ENCODE measurements at regions of chr20 and their contacts with region 1.

Region 1: GRCh38 chr20:8213831-8214587 is 81.9 kb downstream of the PLCB1 start:
- DNase-seq: no peak
- H3K4me3 ChIP-seq: peak overlapping the region in 2 of 4 donors; percentile 3 to 15
- H3K27ac ChIP-seq: peak overlapping the region in 3 of 4 donors; percentile 62 to 75 (median 73)
- H3K4me1 ChIP-seq: peaks cover 16 to 72% (median 67%) of the 10 kb centered on the region in 4 donors
- H3K27me3 ChIP-seq: no peaks in the 10 kb centered on the region
- CTCF ChIP-seq: no peak
- EP300 ChIP-seq: no peak
- POLR2A ChIP-seq: no peak

Region 2: GRCh38 chr20:8372824-8373380 is 158.9 kb after region 1 on chr20:
- intact Hi-C with region 1: loop called (anchors 10 kb)
- DNase-seq: no peak
- H3K4me3 ChIP-seq: no peak overlapping the region
- H3K27ac ChIP-seq: no peak overlapping the region
- H3K4me1 ChIP-seq: peaks cover 0 to 35% (median 26%) of the 10 kb centered on the region in 4 donors
- H3K27me3 ChIP-seq: no peaks in the 10 kb centered on the region
- CTCF ChIP-seq: no peak
- EP300 ChIP-seq: no peak
- POLR2A ChIP-seq: no peak

Measured in esophagus muscularis mucosa (tissue), 4 donors.